Endothelial cell of umbilical vein (primary cell): ENCODE measurements at regions of chr12 and their contacts with region 1.

Region 1: DNA sequence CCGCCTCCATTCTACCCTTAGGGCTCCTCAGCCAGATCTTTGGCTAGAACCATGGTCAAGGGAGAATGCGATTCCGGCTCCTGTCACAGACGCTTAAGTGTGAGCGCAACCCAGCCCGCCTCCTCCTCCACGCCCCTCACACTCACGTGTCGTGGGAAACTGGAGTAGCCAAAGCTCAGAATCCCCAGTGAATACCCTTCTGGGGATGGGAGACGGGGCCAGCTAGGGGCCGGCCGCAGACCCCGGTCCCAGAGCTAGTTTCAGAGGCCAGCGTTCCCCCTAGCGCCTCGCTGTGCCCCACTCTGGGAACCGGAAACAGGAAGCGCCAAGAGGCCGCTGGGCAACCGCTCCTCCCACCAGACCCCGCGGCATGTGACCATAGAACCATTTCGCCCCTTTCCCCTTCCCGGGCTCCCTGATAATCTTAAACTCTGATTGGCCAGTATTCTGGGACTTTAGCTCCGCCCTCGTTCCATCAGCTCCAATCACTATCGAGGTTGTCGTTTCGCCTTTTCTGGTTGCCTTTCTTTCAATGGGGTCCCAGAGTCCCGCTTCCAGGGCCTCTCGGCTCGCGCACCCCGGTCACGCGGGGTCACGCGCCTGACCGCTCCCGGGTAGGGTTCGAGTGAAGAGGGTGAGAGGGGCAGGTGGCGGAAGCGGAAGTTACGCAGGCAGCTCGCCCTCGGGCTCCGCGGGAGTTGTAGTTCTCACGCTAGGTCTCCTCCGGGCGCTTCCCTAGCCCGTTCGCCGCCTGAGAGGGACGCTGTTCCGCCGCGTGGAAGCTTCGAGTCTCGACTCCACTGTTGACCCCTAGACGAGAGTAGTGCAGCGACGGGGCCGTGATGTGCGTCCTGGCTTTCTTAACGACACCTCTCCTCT is at the start of gene M6PR:
- DNase-seq: peak; percentile 95
- H3K4me3 ChIP-seq: peak within 1 kb of the TSS; percentile 58 to 96 (median 95)
- H3K27ac ChIP-seq: peak within 1 kb of the TSS; percentile 98
- H3K4me1 ChIP-seq: peaks cover 21% of the 10 kb centered on the region
- H3K27me3 ChIP-seq: no peaks in the 10 kb centered on the region
- CTCF ChIP-seq: peak; percentile 46 to 74
- POLR2A ChIP-seq: peak; percentile 75
- total RNA-seq, gene M6PR: 113 and 142 TPM in 2 replicates

Region 2: DNA sequence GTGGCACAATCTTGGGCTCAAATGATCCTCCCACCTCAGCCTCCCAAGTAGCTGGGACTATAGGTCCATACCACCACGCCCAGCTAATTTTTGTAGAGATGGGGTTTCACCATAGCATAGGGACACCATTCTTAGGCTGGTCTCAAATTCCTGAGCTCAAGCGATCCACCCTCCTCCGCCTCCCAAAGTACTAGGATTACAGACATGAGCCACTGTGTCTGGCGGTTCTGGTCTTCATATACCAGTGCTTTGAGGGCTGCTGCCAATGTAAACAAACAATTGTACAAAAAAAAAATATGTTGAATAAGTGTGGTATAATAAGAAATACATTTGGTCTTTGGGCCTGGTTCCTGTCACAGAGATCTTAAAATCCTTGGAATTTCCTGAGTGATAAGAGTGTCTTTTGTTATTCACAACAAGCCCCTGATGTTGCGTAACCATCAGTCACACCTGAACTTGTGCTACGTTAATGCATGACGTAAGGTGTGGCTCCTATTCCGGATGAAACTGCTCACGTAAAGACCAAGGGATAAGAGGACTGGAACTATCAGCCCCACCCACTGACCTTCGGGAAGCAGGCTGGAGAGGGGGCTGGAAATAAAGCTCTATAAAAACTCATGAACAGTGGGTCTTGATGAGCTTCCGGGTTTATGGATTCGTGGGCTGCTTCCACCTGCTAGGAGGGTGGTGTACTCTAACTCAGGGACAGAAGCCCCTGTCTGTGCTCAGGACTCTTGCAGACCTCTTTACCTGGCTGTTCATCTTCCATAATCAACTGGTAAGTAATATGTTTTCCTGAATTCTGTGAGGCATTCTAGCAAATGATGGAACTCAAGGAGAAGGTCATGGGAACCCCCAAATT is 268.3 kb before region 1 on chr12:
- CTCF ChIA-PET with region 1: interaction called, 4 read pairs
- POLR2A ChIA-PET with region 1: no interaction called
- dilution Hi-C with region 1: no loop called
- intact Hi-C with region 1: loop called (anchors 1 kb)
- DNase-seq: peak; percentile 91
- H3K4me3 ChIP-seq: peak overlapping the region in 2 of 3 experiments; percentile 3 to 53
- H3K27ac ChIP-seq: peak overlapping the region; percentile 63
- H3K4me1 ChIP-seq: peaks cover 27% of the 10 kb centered on the region
- H3K27me3 ChIP-seq: no peaks in the 10 kb centered on the region
- CTCF ChIP-seq: no peak
- POLR2A ChIP-seq: no peak

Region 3: GRCh38 chr12:8914716-8915526 is 34.7 kb before region 1 on chr12:
- CTCF ChIA-PET with region 1: interaction called, 24 read pairs
- POLR2A ChIA-PET with region 1: interaction called, 4 read pairs
- dilution Hi-C with region 1: no loop called
- intact Hi-C with region 1: loop called (anchors 1 kb)
- DNase-seq: peak; percentile 66
- H3K4me3 ChIP-seq: peak overlapping the region; percentile 87 to 92 (median 87)
- H3K27ac ChIP-seq: peak overlapping the region; percentile 34
- H3K4me1 ChIP-seq: peaks cover 18% of the 10 kb centered on the region
- H3K27me3 ChIP-seq: no peaks in the 10 kb centered on the region
- CTCF ChIP-seq: no peak
- POLR2A ChIP-seq: no peak

Region 4: DNA sequence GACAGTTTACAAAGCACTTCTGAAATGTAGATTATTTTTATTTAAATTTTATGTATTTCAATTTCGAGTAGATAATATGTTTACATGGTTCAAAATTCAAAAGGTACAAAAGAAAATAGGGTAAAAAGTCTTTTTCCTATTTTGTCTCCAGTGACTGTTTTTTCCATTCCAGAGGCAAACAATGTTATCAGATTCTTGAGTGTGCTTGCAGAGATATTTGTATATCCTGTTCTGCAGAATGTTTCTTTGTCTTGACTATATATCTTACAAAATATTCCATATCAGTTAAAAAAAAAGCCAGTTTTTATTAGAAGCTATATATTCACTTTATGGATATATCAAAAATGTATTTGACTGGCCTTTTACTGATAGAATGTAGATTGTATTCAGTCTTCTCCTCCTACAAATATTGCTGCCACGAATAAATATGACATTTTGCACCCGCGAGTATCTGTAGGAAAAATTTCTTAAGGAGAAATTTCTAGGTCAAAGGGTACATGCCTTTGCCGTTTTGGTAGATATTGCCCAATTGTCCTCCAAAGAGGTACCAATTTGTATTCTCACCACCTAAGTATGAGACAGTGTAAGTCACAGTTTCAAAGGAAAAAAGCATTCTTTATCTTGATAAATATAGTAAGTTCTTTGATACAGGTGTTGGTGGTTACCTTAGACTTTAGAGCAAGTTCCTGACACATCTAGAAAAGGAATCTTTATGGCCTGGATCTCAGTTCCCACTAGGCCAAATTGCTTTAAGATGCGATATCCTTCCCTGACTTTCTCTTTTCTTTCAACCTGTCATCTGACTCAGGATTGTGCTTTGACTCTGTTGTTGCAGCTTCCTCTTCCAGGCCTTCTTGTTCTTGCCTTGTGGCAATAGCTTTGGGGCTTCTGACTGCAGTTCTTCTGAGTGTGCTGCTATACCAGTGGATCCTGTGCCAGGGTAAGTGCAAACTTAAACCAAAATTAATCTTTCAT is 42.1 kb after region 1 on chr12:
- CTCF ChIA-PET with region 1: interaction called, 4 read pairs
- POLR2A ChIA-PET with region 1: no interaction called
- dilution Hi-C with region 1: no loop called
- intact Hi-C with region 1: loop called (anchors 1 kb)
- DNase-seq: peak; percentile 61
- H3K4me3 ChIP-seq: no peak overlapping the region
- H3K27ac ChIP-seq: no peak overlapping the region
- H3K4me1 ChIP-seq: peaks cover 55% of the 10 kb centered on the region
- H3K27me3 ChIP-seq: no peaks in the 10 kb centered on the region
- CTCF ChIP-seq: no peak
- POLR2A ChIP-seq: no peak

Region 5: GRCh38 chr12:9032202-9033178 is 82.9 kb after region 1 on chr12:
- CTCF ChIA-PET with region 1: interaction called, 21 read pairs
- POLR2A ChIA-PET with region 1: no interaction called
- dilution Hi-C with region 1: no loop called
- intact Hi-C with region 1: no loop called
- DNase-seq: no peak
- H3K4me3 ChIP-seq: no peak overlapping the region
- H3K27ac ChIP-seq: no peak overlapping the region
- H3K4me1 ChIP-seq: no peaks in the 10 kb centered on the region
- H3K27me3 ChIP-seq: peaks cover 5 to 7% of the 10 kb centered on the region in 2 experiments
- CTCF ChIP-seq: no peak
- POLR2A ChIP-seq: no peak

Region 6: GRCh38 chr12:9039397-9039977 is 89.9 kb after region 1 on chr12:
- CTCF ChIA-PET with region 1: interaction called, 30 read pairs
- POLR2A ChIA-PET with region 1: no interaction called
- dilution Hi-C with region 1: no loop called
- intact Hi-C with region 1: loop called (anchors 1 kb)
- DNase-seq: peak; percentile 63
- H3K4me3 ChIP-seq: no peak overlapping the region
- H3K27ac ChIP-seq: no peak overlapping the region
- H3K4me1 ChIP-seq: no peaks in the 10 kb centered on the region
- H3K27me3 ChIP-seq: peaks cover 7 to 8% of the 10 kb centered on the region in 2 experiments
- CTCF ChIP-seq: peak; percentile 47 to 54
- POLR2A ChIP-seq: no peak